GM13977 (cell line): ENCODE measurements at regions of chr11 and their contacts with region 1.

Region 1: GRCh38 chr11:111283945-111284481 is 14.3 kb upstream of the POU2AF3 start:
- DNase-seq: no peak
- CTCF ChIP-seq: no peak

Region 2: DNA sequence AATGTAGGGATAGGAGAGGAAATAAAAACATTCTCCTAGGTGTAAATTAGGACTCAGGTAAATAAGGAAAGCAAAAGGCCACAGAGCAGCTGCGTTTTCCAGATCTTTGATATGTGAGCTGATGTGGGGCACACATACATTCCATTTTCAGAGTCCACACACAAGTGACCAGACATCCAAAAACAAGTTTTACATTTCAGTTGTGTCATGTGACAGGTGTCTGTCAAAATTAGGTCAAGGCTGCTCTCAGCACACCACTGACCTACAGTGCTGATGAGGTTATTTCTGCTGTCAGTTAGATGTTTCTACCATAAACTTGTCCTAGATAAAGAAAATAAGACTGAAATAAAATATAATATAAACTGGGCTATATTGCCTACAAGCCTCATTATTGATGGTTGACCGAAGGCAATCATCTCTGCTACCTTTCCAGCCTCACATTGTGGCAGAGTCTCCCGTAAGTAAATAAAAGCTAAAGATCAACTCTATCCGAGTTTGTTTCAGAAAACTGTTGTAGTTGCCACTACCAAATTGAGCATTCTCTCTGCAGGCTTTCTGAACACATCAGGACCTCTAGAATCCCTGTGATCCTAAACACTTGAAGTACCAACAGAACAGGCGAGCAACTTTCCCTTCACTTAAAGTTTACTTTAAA is 579.7 kb before region 1 on chr11:
- in situ Hi-C with region 1: no loop called
- DNase-seq: no peak
- CTCF ChIP-seq: no peak

Region 3: GRCh38 chr11:111429066-111429506 is 145.1 kb after region 1 on chr11:
- in situ Hi-C with region 1: loop called (anchors 5 kb)
- DNase-seq: peak; percentile 56
- CTCF ChIP-seq: peak; percentile 84